CD14-positive monocyte (primary cell): ENCODE measurements at regions of chr11 and their contacts with region 1.

Region 1: GRCh38 chr11:122749005-122749687 is 89.2 kb upstream of the CRTAM start:
- DNase-seq: peak; percentile 86 to 95 (median 90)
- H3K4me3 ChIP-seq: peak overlapping the region in 1 of 3 experiments; percentile 29
- H3K4me3 Mint-ChIP-seq: no peak overlapping the region
- H3K27ac ChIP-seq: peak overlapping the region; percentile 46 to 81
- H3K27ac Mint-ChIP-seq: peak overlapping the region in 5 of 7 donors; percentile 75 to 94 (median 94)
- H3K4me1 ChIP-seq: peaks cover 59 to 70% of the 10 kb centered on the region in 2 donors
- H3K4me1 Mint-ChIP-seq: peaks cover 16% of the 10 kb centered on the region
- H3K27me3 ChIP-seq: no peaks in the 10 kb centered on the region
- H3K27me3 Mint-ChIP-seq: peaks cover 0 to 1% (median 0%) of the 10 kb centered on the region in 3 donors
- CTCF ChIP-seq: no peak

Region 2: DNA sequence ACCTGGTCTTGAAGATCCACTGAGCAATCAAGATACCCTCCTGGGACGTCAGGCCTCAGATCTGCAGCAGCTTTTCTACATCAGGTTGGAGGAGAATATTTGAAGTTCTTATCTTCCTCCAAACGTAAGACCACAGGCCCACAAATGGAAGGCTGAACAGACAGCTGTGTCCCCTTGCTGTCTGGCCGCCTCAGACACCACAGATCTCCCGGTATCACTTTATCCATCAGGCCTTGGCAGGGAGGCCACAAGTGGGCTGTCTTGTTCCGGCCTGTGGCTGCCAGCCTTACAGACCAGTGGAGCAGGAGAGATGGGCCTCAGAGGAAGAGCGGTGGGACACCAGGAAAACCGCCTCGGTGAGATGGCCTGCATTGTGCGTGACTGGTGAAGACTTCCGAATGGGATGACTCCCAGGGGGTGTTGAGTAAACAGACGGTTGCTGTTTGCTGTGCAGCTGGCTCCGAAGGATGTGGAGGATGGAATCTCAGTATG is 77.7 kb before region 1 on chr11:
- intact Hi-C with region 1: no loop called
- DNase-seq: peak in 1 of 3 donors; percentile 22
- H3K4me3 ChIP-seq: no peak overlapping the region
- H3K4me3 Mint-ChIP-seq: peak overlapping the region in 1 of 2 donors; percentile 21
- H3K27ac ChIP-seq: no peak overlapping the region
- H3K27ac Mint-ChIP-seq: peak overlapping the region in 2 of 7 donors; percentile 27 to 41
- H3K4me1 ChIP-seq: peaks cover 22 to 45% of the 10 kb centered on the region in 2 donors
- H3K4me1 Mint-ChIP-seq: peaks cover 62% of the 10 kb centered on the region
- H3K27me3 ChIP-seq: no peaks in the 10 kb centered on the region
- H3K27me3 Mint-ChIP-seq: no peaks in the 10 kb centered on the region
- CTCF ChIP-seq: no peak

Region 3: DNA sequence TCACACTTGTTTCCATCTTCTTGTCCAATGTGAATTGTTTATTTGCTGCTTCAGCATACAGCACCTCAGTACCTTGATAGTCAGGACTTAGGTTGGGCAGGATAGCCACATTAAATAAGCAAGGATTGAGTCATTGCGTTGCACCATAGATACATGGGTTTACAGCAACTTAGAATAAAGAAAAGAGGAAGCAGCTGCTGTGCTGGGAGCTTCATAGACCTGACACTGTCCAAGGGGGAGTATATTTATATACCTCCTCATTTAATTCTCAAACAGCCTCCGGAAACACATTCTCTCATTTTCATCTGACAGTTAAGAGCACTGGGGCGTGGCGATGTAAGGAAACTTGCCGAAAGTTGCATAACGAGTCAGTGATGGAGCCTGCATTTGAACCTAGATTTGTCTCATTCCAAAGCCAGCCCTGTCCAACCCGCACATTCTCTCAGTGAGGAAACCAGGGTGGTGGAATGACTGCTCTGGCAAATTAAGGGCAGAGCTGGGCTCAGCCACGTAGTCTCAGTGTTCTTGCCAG is 51.4 kb before region 1 on chr11:
- intact Hi-C with region 1: loop called in 1 of 2 experiments (anchors 10 kb)
- DNase-seq: peak; percentile 88 to 98 (median 93)
- H3K4me3 ChIP-seq: peak overlapping the region in 2 of 3 experiments; percentile 20 to 55
- H3K4me3 Mint-ChIP-seq: peak overlapping the region; percentile 66 to 77
- H3K27ac ChIP-seq: peak overlapping the region; percentile 60 to 81
- H3K27ac Mint-ChIP-seq: peak overlapping the region; percentile 90 to 97 (median 95)
- H3K4me1 ChIP-seq: peaks cover 51 to 62% of the 10 kb centered on the region in 2 donors
- H3K4me1 Mint-ChIP-seq: peaks cover 73% of the 10 kb centered on the region
- H3K27me3 ChIP-seq: no peaks in the 10 kb centered on the region
- H3K27me3 Mint-ChIP-seq: peaks cover 0 to 6% (median 2%) of the 10 kb centered on the region in 3 donors
- CTCF ChIP-seq: no peak

Region 4: GRCh38 chr11:122711831-122712381 is 37.2 kb before region 1 on chr11:
- intact Hi-C with region 1: loop called (anchors 2 to 5 kb)
- DNase-seq: peak in 2 of 3 donors; percentile 33 to 43
- H3K4me3 ChIP-seq: no peak overlapping the region
- H3K4me3 Mint-ChIP-seq: peak overlapping the region in 1 of 2 donors; percentile 35
- H3K27ac ChIP-seq: peak overlapping the region; percentile 31 to 40
- H3K27ac Mint-ChIP-seq: peak overlapping the region; percentile 8 to 93 (median 63)
- H3K4me1 ChIP-seq: peaks cover 62 to 82% of the 10 kb centered on the region in 2 donors
- H3K4me1 Mint-ChIP-seq: peaks cover 78% of the 10 kb centered on the region
- H3K27me3 ChIP-seq: no peaks in the 10 kb centered on the region
- H3K27me3 Mint-ChIP-seq: peaks cover 0 to 2% (median 0%) of the 10 kb centered on the region in 3 donors
- CTCF ChIP-seq: peak; percentile 20

Region 5: DNA sequence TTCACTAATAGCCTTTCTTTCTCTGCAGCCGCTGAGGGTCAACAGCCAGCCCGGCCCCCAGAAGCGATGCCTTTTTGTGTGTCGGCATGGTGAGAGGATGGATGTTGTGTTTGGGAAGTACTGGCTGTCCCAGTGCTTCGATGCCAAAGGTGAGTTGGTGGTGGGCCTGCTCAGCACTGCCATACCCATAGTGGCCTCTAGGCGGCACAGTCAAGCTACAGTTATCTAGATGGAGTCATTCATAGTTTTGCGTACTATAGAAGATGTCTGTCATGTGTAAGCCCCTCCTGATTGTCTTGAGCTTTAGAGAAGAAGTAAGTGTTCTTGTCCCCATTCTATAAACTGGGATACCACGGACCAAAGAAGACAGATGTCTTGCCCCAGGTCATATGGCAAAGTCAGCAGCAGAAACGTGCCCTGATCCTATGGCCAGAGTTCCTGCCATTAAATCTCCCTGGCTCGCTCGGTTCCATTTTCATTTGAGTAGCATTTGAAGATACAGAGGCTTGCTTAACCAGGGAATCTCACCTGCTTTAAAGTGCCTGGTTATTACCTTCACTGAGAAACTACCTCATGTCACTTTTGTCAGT is 47.1 kb after region 1 on chr11:
- intact Hi-C with region 1: no loop called
- DNase-seq: peak; percentile 30 to 52 (median 52)
- H3K4me3 ChIP-seq: no peak overlapping the region
- H3K4me3 Mint-ChIP-seq: no peak overlapping the region
- H3K27ac ChIP-seq: no peak overlapping the region
- H3K27ac Mint-ChIP-seq: peak overlapping the region in 2 of 7 donors; percentile 50 to 58
- H3K4me1 ChIP-seq: peaks cover 0 to 9% of the 10 kb centered on the region in 2 donors
- H3K4me1 Mint-ChIP-seq: peaks cover 11% of the 10 kb centered on the region
- H3K27me3 ChIP-seq: no peaks in the 10 kb centered on the region
- H3K27me3 Mint-ChIP-seq: peaks cover 0 to 1% (median 0%) of the 10 kb centered on the region in 3 donors
- CTCF ChIP-seq: peak; percentile 96